ENCODE measurements at regions of chr17 and their contacts with region 1.

Region 1: GRCh38 chr17:4420692-4421131 is 13.0 kb upstream of the SPNS3 start:
- DNase-seq: peak; percentile 82
- ATAC-seq: peak; percentile 97
- H3K4me3 Mint-ChIP-seq: no peak overlapping the region
- H3K27ac Mint-ChIP-seq: no peak overlapping the region
- H3K4me1 Mint-ChIP-seq: peaks cover 9% of the 10 kb centered on the region
- H3K27me3 Mint-ChIP-seq: no peaks in the 10 kb centered on the region

Region 2: GRCh38 chr17:4381690-4382671 is 38.7 kb before region 1 on chr17:
- CTCF ChIA-PET with region 1: no interaction called
- DNase-seq: no peak
- ATAC-seq: no peak
- H3K4me3 Mint-ChIP-seq: no peak overlapping the region
- H3K27ac Mint-ChIP-seq: no peak overlapping the region
- H3K4me1 Mint-ChIP-seq: peaks cover 20% of the 10 kb centered on the region
- H3K27me3 Mint-ChIP-seq: no peaks in the 10 kb centered on the region

Region 3: DNA sequence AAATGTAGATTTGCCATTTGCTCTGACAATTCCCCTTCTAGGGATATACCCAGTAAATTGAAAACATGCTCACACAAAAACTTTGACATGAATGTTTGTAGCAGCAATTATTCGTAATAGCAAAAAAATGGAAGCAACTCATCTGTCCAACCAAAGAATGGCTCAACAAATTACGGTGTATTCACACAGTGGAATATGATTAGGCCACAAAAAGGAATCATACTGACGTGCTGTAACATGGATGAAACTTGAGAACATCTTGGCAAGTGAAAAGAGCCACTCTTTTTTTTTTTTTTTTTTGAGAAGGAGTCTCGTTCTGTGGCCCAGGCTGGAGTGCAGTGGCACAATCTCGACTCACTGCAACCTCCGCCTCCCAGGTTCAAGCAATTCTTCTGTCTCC is 11.1 kb before region 1 on chr17:
- CTCF ChIA-PET with region 1: no interaction called
- DNase-seq: no peak
- ATAC-seq: no peak
- H3K4me3 Mint-ChIP-seq: no peak overlapping the region
- H3K27ac Mint-ChIP-seq: no peak overlapping the region
- H3K4me1 Mint-ChIP-seq: peaks cover 6% of the 10 kb centered on the region
- H3K27me3 Mint-ChIP-seq: peaks cover 2% of the 10 kb centered on the region

Region 4: GRCh38 chr17:4480929-4481898 is 60.5 kb after region 1 on chr17:
- CTCF ChIA-PET with region 1: interaction called, 10 read pairs
- DNase-seq: peak; percentile 89
- ATAC-seq: peak; percentile 84
- H3K4me3 Mint-ChIP-seq: peak overlapping the region; percentile 57
- H3K27ac Mint-ChIP-seq: peak overlapping the region; percentile 95
- H3K4me1 Mint-ChIP-seq: peaks cover 54% of the 10 kb centered on the region
- H3K27me3 Mint-ChIP-seq: no peaks in the 10 kb centered on the region

Region 5: DNA sequence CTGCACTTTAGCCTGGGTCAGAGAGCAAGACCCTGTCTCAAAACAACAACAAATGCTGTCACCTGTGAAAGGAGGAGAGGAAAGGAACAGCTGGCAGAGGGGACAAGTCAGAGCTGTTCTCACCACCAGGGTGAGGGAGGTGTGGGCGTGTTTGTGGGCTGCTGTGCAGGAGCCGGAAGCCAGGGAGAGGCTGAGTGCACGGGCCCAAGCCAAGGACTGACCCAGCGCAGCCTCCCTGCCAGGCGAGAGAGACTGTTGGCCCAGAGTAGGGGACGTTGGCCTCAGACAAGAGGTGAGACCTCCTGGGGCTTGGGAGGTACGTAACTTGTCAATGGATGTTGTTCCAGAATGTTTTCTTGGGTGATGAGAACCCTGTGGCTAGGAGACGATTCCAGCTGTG is 88.7 kb after region 1 on chr17:
- CTCF ChIA-PET with region 1: interaction called, 19 read pairs
- DNase-seq: peak; percentile 85
- ATAC-seq: peak; percentile 89
- H3K4me3 Mint-ChIP-seq: no peak overlapping the region
- H3K27ac Mint-ChIP-seq: no peak overlapping the region
- H3K4me1 Mint-ChIP-seq: peaks cover 50% of the 10 kb centered on the region
- H3K27me3 Mint-ChIP-seq: no peaks in the 10 kb centered on the region

Region 6: DNA sequence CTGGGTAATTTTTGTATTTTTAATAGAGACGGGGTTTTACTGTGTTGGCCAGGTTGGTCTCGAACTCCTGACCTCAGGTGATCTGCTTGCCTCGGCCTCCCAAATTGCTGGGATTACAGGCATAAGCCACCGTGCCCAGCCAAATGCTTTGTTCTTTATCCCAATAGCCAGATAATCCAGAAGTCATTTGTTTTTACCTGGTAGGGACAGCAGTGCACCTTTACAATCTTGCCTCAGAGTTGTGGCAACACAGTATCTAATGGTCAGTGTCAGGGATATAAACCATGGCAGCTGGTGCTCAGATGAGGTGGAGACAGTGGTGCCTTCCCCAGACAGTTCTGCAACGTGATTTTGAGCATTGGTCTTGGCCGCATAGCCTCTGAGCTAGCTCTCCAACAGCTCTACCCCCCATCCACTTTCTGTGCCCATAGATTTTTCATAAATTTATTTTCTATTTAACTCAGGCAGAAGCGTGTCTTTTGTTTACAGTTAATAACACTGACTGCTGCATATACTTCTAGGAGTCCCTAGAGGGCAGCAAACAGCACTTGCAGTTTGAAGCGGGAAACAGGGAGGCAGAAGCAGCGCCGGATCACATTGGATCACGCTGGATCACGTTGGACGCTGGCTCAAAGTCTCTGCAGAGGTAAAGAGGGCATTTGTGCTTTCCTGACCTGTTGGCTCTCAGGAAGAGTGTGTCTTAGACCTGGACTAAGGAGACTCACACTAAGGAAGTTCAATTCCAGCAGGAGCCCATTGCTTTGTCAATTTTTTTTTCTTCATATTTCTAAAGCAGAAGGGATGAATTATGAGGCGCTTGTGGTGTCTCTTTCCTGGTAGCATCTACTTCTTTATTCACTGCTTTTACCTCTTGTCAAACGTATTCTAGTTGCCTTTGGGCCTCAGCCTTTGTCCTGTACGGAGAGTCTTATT is 144.8 kb after region 1 on chr17:
- CTCF ChIA-PET with region 1: interaction called, 37 read pairs
- DNase-seq: peak; percentile 75
- ATAC-seq: peak; percentile 79
- H3K4me3 Mint-ChIP-seq: peak overlapping the region; percentile 40
- H3K27ac Mint-ChIP-seq: no peak overlapping the region
- H3K4me1 Mint-ChIP-seq: peaks cover 37% of the 10 kb centered on the region
- H3K27me3 Mint-ChIP-seq: peaks cover 4% of the 10 kb centered on the region